CD8-positive, alpha-beta T cell (primary cell): ENCODE measurements at regions of chr17 and their contacts with region 1.

Region 1: GRCh38 chr17:31842183-31843069 is 16.6 kb downstream of the COPRS start:
- DNase-seq: peak; percentile 28 to 79 (median 59)
- ATAC-seq: peak; percentile 95
- H3K4me3 ChIP-seq: no peak overlapping the region
- H3K4me3 Mint-ChIP-seq: no peak overlapping the region
- H3K27ac ChIP-seq: no peak overlapping the region
- H3K27ac Mint-ChIP-seq: no peak overlapping the region
- H3K4me1 ChIP-seq: no peaks in the 10 kb centered on the region
- H3K4me1 Mint-ChIP-seq: no peaks in the 10 kb centered on the region
- H3K27me3 ChIP-seq: peaks cover 0 to 6% of the 10 kb centered on the region in 2 experiments
- H3K27me3 Mint-ChIP-seq: peaks cover 9% of the 10 kb centered on the region
- CTCF ChIP-seq: peak; percentile 94

Region 2: GRCh38 chr17:31015639-31016038 is 826.8 kb before region 1 on chr17:
- CTCF ChIA-PET with region 1: no interaction called
- POLR2A ChIA-PET with region 1: no interaction called
- intact Hi-C with region 1: loop called in 1 of 2 experiments (anchors 5 kb)
- DNase-seq: no peak
- ATAC-seq: no peak
- H3K4me3 ChIP-seq: no peak overlapping the region
- H3K4me3 Mint-ChIP-seq: no peak overlapping the region
- H3K27ac ChIP-seq: no peak overlapping the region
- H3K27ac Mint-ChIP-seq: no peak overlapping the region
- H3K4me1 ChIP-seq: no peaks in the 10 kb centered on the region
- H3K4me1 Mint-ChIP-seq: no peaks in the 10 kb centered on the region
- H3K27me3 ChIP-seq: no peaks in the 10 kb centered on the region
- H3K27me3 Mint-ChIP-seq: peaks cover 2% of the 10 kb centered on the region
- CTCF ChIP-seq: no peak

Region 3: DNA sequence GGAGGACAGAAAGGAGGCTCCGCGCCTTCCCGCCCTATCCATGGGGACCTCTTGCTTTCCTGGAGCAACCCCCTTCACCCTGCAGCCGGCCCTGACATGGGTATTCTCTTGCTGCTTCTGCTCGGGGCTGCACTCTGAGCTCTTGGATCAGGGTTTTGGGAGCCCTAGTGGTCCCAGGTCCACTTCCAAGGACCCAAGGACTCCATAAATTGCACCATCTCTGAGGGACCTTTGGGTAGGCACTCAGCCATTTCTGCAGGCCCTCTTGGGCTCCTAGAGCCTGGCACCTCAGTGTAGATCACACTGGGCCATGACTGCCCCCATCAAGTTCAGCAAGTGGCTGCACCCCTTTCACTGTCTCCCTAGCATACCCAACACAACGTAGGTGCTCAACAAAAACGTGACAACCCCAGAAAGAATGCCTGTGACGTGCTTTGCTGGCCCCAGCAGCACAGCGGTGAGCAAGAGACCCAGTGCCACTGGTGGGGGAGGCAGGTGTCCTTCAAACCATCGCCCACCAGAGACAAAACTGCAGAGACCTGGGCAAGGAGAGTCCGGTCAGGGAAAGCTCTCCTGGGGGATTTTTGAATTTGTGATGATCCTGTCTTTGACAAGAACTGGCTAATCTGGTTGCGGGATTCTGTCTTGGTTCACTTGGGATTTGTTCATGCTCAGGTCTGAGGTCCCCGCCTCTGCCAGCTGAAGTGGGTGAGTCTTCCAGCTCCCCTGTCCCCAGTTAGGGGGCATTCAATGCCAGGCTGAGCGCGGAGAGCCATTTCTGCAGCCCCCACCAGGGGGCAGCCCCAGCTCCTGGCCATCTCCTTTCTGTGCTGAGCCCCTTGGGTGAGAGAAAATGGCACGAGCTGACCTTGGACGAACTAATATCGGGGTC is 453.4 kb before region 1 on chr17:
- CTCF ChIA-PET with region 1: interaction called, 22 read pairs
- POLR2A ChIA-PET with region 1: no interaction called
- intact Hi-C with region 1: loop called in 1 of 2 experiments (anchors 1 kb)
- DNase-seq: peak in 8 of 9 experiments; percentile 16 to 70 (median 52)
- ATAC-seq: peak; percentile 71
- H3K4me3 ChIP-seq: no peak overlapping the region
- H3K4me3 Mint-ChIP-seq: no peak overlapping the region
- H3K27ac ChIP-seq: no peak overlapping the region
- H3K27ac Mint-ChIP-seq: no peak overlapping the region
- H3K4me1 ChIP-seq: peaks cover 11% of the 10 kb centered on the region
- H3K4me1 Mint-ChIP-seq: peaks cover 9% of the 10 kb centered on the region
- H3K27me3 ChIP-seq: peaks cover 8 to 10% of the 10 kb centered on the region in 2 experiments
- H3K27me3 Mint-ChIP-seq: peaks cover 30% of the 10 kb centered on the region
- CTCF ChIP-seq: peak; percentile 58

Region 4: GRCh38 chr17:31524926-31525800 is 317.3 kb before region 1 on chr17:
- CTCF ChIA-PET with region 1: interaction called, 7 read pairs
- POLR2A ChIA-PET with region 1: no interaction called
- intact Hi-C with region 1: loop called in 1 of 2 experiments (anchors 5 kb)
- DNase-seq: peak; percentile 75 to 95 (median 83)
- ATAC-seq: peak; percentile 80
- H3K4me3 ChIP-seq: no peak overlapping the region
- H3K4me3 Mint-ChIP-seq: no peak overlapping the region
- H3K27ac ChIP-seq: no peak overlapping the region
- H3K27ac Mint-ChIP-seq: no peak overlapping the region
- H3K4me1 ChIP-seq: no peaks in the 10 kb centered on the region
- H3K4me1 Mint-ChIP-seq: peaks cover 1% of the 10 kb centered on the region
- H3K27me3 ChIP-seq: no peaks in the 10 kb centered on the region
- H3K27me3 Mint-ChIP-seq: no peaks in the 10 kb centered on the region
- CTCF ChIP-seq: peak; percentile 90

Region 5: GRCh38 chr17:31558748-31559644 is 283.4 kb before region 1 on chr17:
- CTCF ChIA-PET with region 1: interaction called, 8 read pairs
- POLR2A ChIA-PET with region 1: no interaction called
- intact Hi-C with region 1: loop called in 1 of 2 experiments (anchors 1 kb)
- DNase-seq: peak; percentile 13 to 74 (median 49)
- ATAC-seq: peak; percentile 93
- H3K4me3 ChIP-seq: peak overlapping the region; percentile 51 to 58
- H3K4me3 Mint-ChIP-seq: peak overlapping the region; percentile 70
- H3K27ac ChIP-seq: no peak overlapping the region
- H3K27ac Mint-ChIP-seq: no peak overlapping the region
- H3K4me1 ChIP-seq: peaks cover 6% of the 10 kb centered on the region
- H3K4me1 Mint-ChIP-seq: peaks cover 7% of the 10 kb centered on the region
- H3K27me3 ChIP-seq: peaks cover 0 to 5% of the 10 kb centered on the region in 2 experiments
- H3K27me3 Mint-ChIP-seq: peaks cover 9% of the 10 kb centered on the region
- CTCF ChIP-seq: no peak